Gastrocnemius medialis (tissue), 4 donors: ENCODE measurements at regions of chr2 and their contacts with region 1.

Region 1: DNA sequence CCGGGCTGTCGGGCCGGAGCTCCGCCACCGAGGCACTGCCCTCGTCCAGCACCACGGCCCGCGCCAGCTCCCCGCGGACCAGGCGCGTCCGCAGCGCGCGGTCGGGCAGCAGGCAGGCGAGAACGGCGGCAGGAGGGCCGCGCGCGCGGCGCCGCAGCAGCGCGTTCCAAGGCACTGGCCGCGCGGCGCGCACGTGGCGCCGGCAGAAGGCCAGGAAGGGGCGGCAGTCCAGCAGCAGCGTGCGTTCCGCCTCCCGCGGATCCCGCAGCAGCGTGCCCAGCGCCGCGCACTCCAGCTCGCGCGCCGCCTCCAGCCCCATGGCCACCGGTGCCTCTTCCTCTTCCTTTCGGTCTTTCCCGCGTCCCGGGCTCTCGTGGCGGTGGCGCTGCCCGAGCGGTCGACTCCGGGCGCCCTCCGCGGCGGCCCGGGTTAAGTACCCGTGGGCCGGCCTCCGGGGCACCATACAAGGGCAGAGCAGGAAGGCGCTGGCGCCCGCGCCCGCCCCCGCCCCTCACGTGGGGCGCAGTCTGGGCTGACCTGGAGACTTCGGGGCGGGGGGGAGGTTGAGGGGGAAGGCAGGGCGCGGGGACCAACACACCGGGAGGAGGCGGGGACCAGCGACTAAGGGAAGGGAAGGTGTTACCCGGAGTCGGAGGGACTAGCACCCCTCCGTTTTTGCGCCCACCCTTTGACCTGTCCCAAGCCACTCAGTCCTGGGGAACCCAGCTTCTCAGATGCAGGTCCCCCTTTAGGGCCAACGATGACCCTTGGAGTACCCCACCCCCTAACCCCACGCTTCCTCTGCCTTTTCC is at the start of gene DUSP2:
- DNase-seq: peak; percentile 54 to 75
- ATAC-seq: peak; percentile 73 to 86
- H3K4me3 ChIP-seq: peak within 1 kb of the TSS; percentile 48 to 71 (median 58)
- H3K27ac ChIP-seq: peak within 1 kb of the TSS; percentile 67 to 77 (median 70)
- H3K4me1 ChIP-seq: peaks cover 0 to 7% of the 10 kb centered on the region in 2 donors
- H3K27me3 ChIP-seq: no peaks in the 10 kb centered on the region
- CTCF ChIP-seq: peak in 1 of 5 experiments; percentile 11
- POLR2A ChIP-seq: peak; percentile 62 to 80
- total RNA-seq, gene DUSP2: 1.6 to 4.0 (median 2.9) TPM

Region 2: DNA sequence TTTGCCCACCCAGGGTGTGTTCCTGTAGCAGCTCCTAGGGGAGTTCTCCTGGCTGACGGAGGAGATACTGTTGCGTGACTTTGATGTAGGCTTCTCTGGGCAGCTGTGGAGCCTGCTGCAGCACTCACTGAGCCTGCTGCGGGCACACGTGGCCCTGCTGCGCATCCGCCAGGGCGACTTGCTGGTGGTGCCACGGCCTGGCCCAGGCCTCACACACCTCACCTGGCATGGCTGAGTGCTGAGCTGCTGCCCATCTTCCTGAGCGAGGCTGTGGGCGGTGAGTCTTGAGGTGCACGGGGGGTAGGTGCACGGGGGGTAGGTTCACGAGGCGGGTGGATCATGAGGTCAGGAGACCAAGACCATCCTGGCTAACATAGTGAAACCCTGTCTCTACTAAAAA is 345.4 kb before region 1 on chr2:
- in situ Hi-C with region 1: no loop called
- intact Hi-C with region 1: no loop called
- DNase-seq: no peak
- ATAC-seq: no peak
- H3K4me3 ChIP-seq: no peak overlapping the region
- H3K27ac ChIP-seq: no peak overlapping the region
- H3K4me1 ChIP-seq: no peaks in the 10 kb centered on the region
- H3K27me3 ChIP-seq: no peaks in the 10 kb centered on the region
- CTCF ChIP-seq: no peak
- POLR2A ChIP-seq: no peak

Region 3: DNA sequence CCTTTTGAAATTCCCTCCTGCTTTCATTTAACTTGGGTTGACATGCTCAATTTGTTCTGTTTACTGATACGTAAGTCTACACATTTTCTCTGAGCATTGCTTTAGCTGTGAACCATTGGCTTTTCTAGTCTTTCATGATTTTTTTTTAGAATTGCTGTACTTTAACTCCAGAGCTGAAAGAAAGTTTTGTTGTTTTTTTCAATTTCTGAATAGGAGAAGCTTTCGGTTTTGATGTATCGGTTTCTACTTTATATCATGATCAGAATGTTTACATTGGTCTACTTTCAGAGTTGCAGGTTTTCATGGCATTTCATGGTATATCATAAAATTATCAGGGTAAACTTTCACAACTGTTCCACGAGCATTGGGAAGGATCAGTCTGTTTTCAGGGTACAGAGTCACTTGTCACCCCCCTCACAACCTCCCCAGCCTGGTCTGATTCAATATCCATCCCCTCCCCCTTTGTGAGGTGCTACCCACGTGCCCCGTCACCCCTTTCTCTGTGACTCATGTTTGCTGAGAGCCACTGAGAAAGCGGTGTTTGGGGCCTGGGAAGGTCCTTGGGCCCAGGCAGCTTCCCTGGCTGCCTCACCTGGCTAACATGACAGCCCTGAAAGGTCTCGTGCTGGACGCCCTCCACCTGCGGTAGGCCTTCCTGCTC is 14.0 kb before region 1 on chr2:
- in situ Hi-C with region 1: no loop called
- intact Hi-C with region 1: no loop called
- DNase-seq: no peak
- ATAC-seq: no peak
- H3K4me3 ChIP-seq: no peak overlapping the region
- H3K27ac ChIP-seq: no peak overlapping the region
- H3K4me1 ChIP-seq: no peaks in the 10 kb centered on the region
- H3K27me3 ChIP-seq: no peaks in the 10 kb centered on the region
- CTCF ChIP-seq: no peak
- POLR2A ChIP-seq: no peak

Region 4: DNA sequence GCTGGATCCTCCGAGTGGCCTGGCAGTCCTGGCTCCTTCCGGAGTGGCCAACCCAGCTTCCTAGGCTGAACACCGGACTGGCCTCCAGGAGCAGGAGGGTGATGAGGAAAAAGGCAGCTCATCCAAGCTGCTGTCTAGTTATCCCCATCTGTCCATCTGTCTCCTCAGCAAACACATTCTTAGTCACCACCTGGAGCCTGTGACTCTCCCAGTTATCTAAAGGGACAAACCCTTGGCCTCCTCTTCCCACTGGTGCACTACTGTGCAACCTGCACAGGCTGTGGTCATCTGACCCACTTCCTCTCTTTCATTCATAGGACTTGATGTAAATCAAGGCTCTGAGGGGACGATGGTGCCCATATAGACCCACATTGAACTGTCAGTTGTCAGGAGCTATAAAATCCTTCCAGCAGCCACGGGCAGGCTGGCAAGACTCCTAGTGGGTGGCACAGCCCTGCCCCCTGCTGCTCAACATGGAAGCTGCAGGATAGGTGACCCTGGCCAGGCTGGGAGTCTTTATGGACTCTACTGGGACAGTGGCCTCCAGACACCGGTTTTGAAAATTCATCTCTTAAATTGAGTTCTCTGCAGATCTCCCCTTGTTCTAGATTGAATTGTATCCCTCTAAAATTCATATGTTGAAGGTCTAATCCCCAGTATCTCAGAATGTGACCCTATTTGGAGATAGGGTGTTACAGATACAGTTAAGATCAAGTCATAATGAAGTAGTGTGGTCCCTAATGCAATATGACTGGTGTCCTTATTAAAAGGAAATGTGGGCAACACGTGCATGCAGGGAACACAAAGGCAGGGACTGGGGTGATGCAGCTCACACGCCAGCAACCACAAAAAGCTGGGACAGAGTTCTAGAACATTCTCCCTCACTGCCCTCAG is 29.3 kb after region 1 on chr2:
- in situ Hi-C with region 1: no loop called
- intact Hi-C with region 1: loop called (anchors 2 kb)
- DNase-seq: peak; percentile 53 to 71
- ATAC-seq: peak; percentile 70 to 75
- H3K4me3 ChIP-seq: no peak overlapping the region
- H3K27ac ChIP-seq: peak overlapping the region in 2 of 4 donors; percentile 2 to 25
- H3K4me1 ChIP-seq: peaks cover 0 to 12% of the 10 kb centered on the region in 2 donors
- H3K27me3 ChIP-seq: no peaks in the 10 kb centered on the region
- CTCF ChIP-seq: peak; percentile 70 to 92 (median 82)
- POLR2A ChIP-seq: no peak

Region 5: GRCh38 chr2:96208143-96209010 is 63.1 kb after region 1 on chr2 and contains the start of gene STARD7:
- in situ Hi-C with region 1: no loop called
- intact Hi-C with region 1: loop called (anchors 2 kb)
- DNase-seq: peak; percentile 98 to 99
- ATAC-seq: peak; percentile 59 to 65
- H3K4me3 ChIP-seq: peak within 1 kb of the TSS; percentile 68 to 94 (median 89)
- H3K27ac ChIP-seq: peak within 1 kb of the TSS; percentile 90 to 99 (median 98)
- H3K4me1 ChIP-seq: peaks cover 31 to 46% of the 10 kb centered on the region in 2 donors
- H3K27me3 ChIP-seq: no peaks in the 10 kb centered on the region
- CTCF ChIP-seq: peak in 4 of 5 experiments; percentile 21 to 46 (median 29)
- POLR2A ChIP-seq: peak; percentile 99 to 100
- total RNA-seq, gene STARD7: 237 to 512 (median 313) TPM

Region 6: DNA sequence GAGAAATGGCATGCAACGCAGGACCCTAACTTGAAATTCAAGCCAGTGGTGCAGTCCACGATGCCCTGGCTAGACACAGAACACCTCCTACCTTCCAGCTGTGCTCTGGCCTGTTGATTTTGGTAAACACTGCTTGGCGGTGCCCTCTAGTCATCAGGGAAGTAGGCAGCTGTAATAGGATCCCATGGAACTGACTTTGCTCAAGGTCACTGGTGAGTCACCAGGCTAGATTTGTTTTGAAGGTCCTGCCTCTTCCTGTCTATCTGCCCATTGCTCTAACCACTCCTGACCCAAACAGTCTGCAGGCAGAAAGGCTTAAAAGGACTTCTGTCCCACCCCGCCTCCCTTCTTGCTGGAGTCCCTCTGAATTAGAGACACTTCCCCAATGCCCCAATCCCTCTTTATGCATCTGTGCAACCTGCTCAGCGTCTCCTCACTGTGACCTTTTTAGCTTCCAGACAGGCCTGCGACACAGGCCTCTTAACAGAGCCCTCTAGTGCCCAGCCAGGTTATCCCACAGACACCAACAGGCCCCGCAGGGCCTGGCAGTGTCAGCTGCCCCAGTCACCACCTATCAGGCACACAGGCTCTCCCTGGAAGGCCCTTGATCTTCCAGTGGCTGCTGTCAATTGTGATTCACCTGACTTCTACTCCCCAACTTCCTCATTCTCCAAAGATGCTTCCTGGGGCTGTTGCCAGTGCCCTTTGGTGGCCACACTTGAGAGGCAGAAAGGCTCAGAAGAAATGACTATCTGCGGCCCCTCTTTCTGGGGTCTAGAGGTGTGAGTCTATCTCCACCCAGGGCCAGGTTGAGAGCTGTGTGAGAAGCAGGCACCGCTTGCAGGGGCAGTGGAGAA is 115.4 kb after region 1 on chr2:
- in situ Hi-C with region 1: loop called in 1 of 4 experiments (anchors 25 kb)
- intact Hi-C with region 1: loop called (anchors 2 kb)
- DNase-seq: peak; percentile 91
- ATAC-seq: peak; percentile 82 to 83
- H3K4me3 ChIP-seq: peak overlapping the region in 3 of 4 donors; percentile 17 to 40 (median 25)
- H3K27ac ChIP-seq: peak overlapping the region; percentile 94 to 99 (median 96)
- H3K4me1 ChIP-seq: peaks cover 89 to 93% of the 10 kb centered on the region in 2 donors
- H3K27me3 ChIP-seq: no peaks in the 10 kb centered on the region
- CTCF ChIP-seq: peak in 4 of 5 experiments; percentile 38 to 53 (median 42)
- POLR2A ChIP-seq: peak; percentile 30 to 68

Region 7: GRCh38 chr2:96265840-96266679 is 120.8 kb after region 1 on chr2 and contains the starts of genes CIAO1 and TMEM127:
- in situ Hi-C with region 1: loop called in 1 of 4 experiments (anchors 25 kb)
- intact Hi-C with region 1: loop called (anchors 2 kb)
- DNase-seq: peak; percentile 98 to 99
- ATAC-seq: peak; percentile 87
- H3K4me3 ChIP-seq: peak within 1 kb of the TSS; percentile 84 to 97 (median 90)
- H3K27ac ChIP-seq: peak within 1 kb of the TSS; percentile 94 to 99 (median 96)
- H3K4me1 ChIP-seq: peaks cover 49 to 51% of the 10 kb centered on the region in 2 donors
- H3K27me3 ChIP-seq: no peaks in the 10 kb centered on the region
- CTCF ChIP-seq: peak; percentile 20 to 42 (median 35)
- POLR2A ChIP-seq: peak; percentile 98
- total RNA-seq, gene CIAO1: 73.5 to 102 (median 95.6) TPM
- total RNA-seq, gene TMEM127: 27.1 to 38.8 (median 30.9) TPM